Common myeloid progenitor, CD34-positive (primary cell): ENCODE measurements at regions of chr11 and their contacts with region 1.

Region 1: GRCh38 chr11:34468209-34468841 is 29.6 kb downstream of the CAT start:
- DNase-seq: peak; percentile 58 to 84 (median 83)
- H3K4me3 ChIP-seq: no peak overlapping the region
- H3K27ac ChIP-seq: no peak overlapping the region
- H3K4me1 ChIP-seq: peaks cover 0 to 7% (median 0%) of the 10 kb centered on the region in 4 experiments
- H3K27me3 ChIP-seq: no peaks in the 10 kb centered on the region

Region 2: GRCh38 chr11:34243726-34244464 is 224.4 kb before region 1 on chr11:
- CTCF ChIA-PET with region 1: no interaction called
- POLR2A ChIA-PET with region 1: no interaction called
- DNase-seq: no peak
- H3K4me3 ChIP-seq: no peak overlapping the region
- H3K27ac ChIP-seq: no peak overlapping the region
- H3K4me1 ChIP-seq: peaks cover 0 to 15% (median 0%) of the 10 kb centered on the region in 4 experiments
- H3K27me3 ChIP-seq: no peaks in the 10 kb centered on the region

Region 3: DNA sequence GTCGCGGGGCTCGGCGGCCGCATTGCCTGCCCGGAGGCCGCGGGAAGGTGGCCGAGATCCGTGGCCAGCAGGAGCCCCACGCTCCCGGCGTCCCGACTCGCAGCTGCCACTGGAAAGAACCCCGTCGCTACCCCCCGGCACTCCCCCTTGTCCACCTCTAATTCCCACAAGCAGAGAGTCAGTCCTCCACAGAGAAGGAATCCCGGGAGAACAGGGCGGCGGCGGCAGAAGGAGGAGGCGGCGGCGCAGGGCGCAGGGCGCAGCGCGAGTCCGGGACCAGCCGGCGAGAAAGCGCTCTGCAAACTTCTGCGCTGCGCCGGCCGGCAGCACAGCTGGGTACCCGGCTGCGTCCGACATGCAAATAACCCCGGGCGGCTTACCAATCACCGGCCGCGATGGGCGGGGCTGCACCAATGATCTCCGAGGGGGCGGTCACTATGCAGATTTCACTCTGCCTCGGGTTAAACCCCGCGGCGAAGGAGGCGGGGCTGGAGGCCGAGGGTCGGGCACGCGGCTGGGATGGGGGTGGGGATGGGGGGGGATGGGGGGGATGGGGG is 110.5 kb before region 1 on chr11 and contains the start of gene ABTB2:
- CTCF ChIA-PET with region 1: interaction called, 23 read pairs
- POLR2A ChIA-PET with region 1: no interaction called
- DNase-seq: peak; percentile 95 to 98 (median 98)
- H3K4me3 ChIP-seq: peak within 1 kb of the TSS; percentile 22 to 90 (median 74)
- H3K27ac ChIP-seq: no peak within 1 kb of the TSS
- H3K4me1 ChIP-seq: peaks cover 3 to 40% (median 32%) of the 10 kb centered on the region in 4 experiments
- H3K27me3 ChIP-seq: peaks cover 0 to 38% (median 16%) of the 10 kb centered on the region in 5 experiments

Region 4: DNA sequence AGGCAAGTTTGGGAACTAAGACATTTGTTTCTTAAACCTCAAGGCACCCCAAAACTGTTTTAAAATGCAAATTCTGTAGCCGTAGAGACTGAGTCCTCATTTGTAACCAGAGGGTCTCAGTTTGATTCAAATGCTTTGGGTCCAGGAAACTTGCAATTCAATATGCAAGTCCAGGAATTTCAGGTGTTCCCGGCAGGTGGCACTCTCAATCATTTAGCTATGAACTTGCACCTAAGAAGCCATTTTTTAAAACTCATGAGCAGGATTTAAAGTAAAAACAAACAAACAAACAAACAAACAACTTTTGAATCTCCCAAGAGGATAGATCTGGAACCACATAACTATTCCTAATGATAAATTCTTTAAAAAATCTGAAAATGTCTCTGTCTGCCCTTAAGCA is 101.8 kb before region 1 on chr11:
- CTCF ChIA-PET with region 1: interaction called, 23 read pairs
- POLR2A ChIA-PET with region 1: interaction called, 3 read pairs
- DNase-seq: peak; percentile 58 to 69 (median 63)
- H3K4me3 ChIP-seq: no peak overlapping the region
- H3K27ac ChIP-seq: no peak overlapping the region
- H3K4me1 ChIP-seq: peaks cover 0 to 18% (median 0%) of the 10 kb centered on the region in 4 experiments
- H3K27me3 ChIP-seq: no peaks in the 10 kb centered on the region